HepG2 (cell line): ENCODE measurements at regions of chr6 and their contacts with region 1.

Region 1: DNA sequence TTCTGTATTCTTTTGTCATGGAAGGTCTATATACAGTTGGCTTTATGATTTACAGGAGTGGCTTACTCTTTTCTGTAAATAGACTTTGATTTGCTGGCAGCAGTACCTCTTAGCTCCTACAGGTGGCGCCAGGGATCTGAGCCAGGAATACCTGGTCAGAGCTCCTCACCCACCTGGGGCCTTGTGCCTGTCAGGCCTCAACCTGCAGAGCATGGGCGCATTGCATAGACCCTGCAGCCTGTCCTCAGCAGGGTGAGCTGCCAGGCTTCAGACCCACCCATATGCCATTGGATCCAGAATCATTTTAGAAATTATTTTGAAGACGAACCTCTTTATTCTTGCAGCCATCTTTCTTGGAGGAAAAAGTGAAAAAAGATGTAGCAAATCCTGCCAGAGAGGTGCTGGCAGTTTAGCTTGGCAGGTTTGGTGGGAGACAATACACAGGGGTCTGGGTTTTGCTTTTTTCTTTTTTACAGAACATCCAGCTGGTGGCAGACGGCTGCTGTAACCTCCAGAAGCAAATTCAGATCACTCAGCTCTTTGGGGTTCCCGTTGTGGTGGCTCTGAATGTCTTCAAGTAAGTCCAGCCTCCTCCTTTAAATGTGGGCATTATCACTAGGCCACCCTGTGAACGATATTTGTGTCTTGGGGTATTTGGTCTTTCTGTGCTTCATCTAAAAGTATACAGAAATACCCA is 149.1 kb downstream of the MTHFD1L start:
- DNase-seq: peak; percentile 80
- ATAC-seq: peak; percentile 89
- H3K4me3 ChIP-seq: no peak overlapping the region
- H3K27ac ChIP-seq: no peak overlapping the region
- H3K4me1 ChIP-seq: peaks cover 31% of the 10 kb centered on the region
- H3K27me3 ChIP-seq: no peaks in the 10 kb centered on the region
- CTCF ChIP-seq: peak; percentile 98
- EP300 ChIP-seq: no peak; a peak in 1 of 4 replicates
- POLR2A ChIP-seq: no peak
- RAD21 ChIP-seq: peak; percentile 99

Region 2: GRCh38 chr6:150891888-150892485 is 122.6 kb before region 1 on chr6:
- CTCF ChIA-PET with region 1: interaction called, 3 read pairs
- POLR2A ChIA-PET with region 1: no interaction called
- in situ Hi-C with region 1: no loop called
- intact Hi-C with region 1: loop called (anchors 10 kb)
- DNase-seq: peak; percentile 69
- ATAC-seq: peak; percentile 86
- H3K4me3 ChIP-seq: no peak overlapping the region
- H3K27ac ChIP-seq: no peak overlapping the region
- H3K4me1 ChIP-seq: no peaks in the 10 kb centered on the region
- H3K27me3 ChIP-seq: no peaks in the 10 kb centered on the region
- CTCF ChIP-seq: peak; percentile 92
- EP300 ChIP-seq: no peak
- POLR2A ChIP-seq: no peak
- RAD21 ChIP-seq: peak; percentile 76

Region 3: GRCh38 chr6:151067684-151068596 is 53.4 kb after region 1 on chr6:
- CTCF ChIA-PET with region 1: no interaction called
- POLR2A ChIA-PET with region 1: interaction called, 3 read pairs
- in situ Hi-C with region 1: no loop called
- intact Hi-C with region 1: loop called (anchors 10 kb)
- DNase-seq: peak; percentile 96
- ATAC-seq: peak; percentile 88
- H3K4me3 ChIP-seq: peak overlapping the region; percentile 2 to 45 (median 3); a peak in 3 of 6 replicates
- H3K27ac ChIP-seq: peak overlapping the region; percentile 83
- H3K4me1 ChIP-seq: peaks cover 58% of the 10 kb centered on the region
- H3K27me3 ChIP-seq: no peaks in the 10 kb centered on the region
- CTCF ChIP-seq: no peak
- EP300 ChIP-seq: peak; percentile 54 to 90; a peak in 2 of 4 replicates
- POLR2A ChIP-seq: 0 out of 4 replicates have a peak, but pooled peaks of 1 of the 2 experiments have one; percentile 19
- RAD21 ChIP-seq: no peak

Region 4: DNA sequence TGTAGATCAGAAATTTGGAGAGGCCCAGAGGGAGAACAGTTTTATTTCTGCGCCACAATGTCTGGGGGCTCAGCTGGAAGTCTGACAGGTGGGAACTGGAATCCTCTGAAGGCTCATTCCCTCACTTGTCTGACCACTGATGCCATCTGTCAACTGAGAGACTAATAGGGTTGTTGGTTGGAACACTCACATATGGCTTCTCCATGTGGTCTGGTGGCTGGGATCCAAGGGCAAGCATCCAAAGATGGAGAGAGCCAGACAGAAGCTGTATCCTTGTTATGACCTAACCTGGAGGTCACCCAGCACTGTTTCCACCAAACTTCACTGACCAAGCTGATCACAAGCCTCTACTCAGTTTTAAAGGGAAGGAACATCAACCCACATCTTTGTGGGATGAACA is 107.3 kb after region 1 on chr6:
- CTCF ChIA-PET with region 1: no interaction called
- POLR2A ChIA-PET with region 1: no interaction called
- in situ Hi-C with region 1: no loop called
- intact Hi-C with region 1: loop called (anchors 5 kb)
- DNase-seq: no peak
- ATAC-seq: no peak
- H3K4me3 ChIP-seq: no peak overlapping the region
- H3K27ac ChIP-seq: no peak overlapping the region
- H3K4me1 ChIP-seq: peaks cover 63% of the 10 kb centered on the region
- H3K27me3 ChIP-seq: no peaks in the 10 kb centered on the region
- CTCF ChIP-seq: no peak
- EP300 ChIP-seq: no peak
- POLR2A ChIP-seq: no peak
- RAD21 ChIP-seq: no peak

Region 5: GRCh38 chr6:151330134-151330696 is 315.7 kb after region 1 on chr6:
- CTCF ChIA-PET with region 1: interaction called, 67 read pairs
- POLR2A ChIA-PET with region 1: interaction called, 17 read pairs
- in situ Hi-C with region 1: loop called (anchors 5 kb)
- intact Hi-C with region 1: loop called (anchors 1 kb)
- DNase-seq: no peak
- ATAC-seq: no peak
- H3K4me3 ChIP-seq: no peak overlapping the region
- H3K27ac ChIP-seq: no peak overlapping the region
- H3K4me1 ChIP-seq: peaks cover 15% of the 10 kb centered on the region
- H3K27me3 ChIP-seq: no peaks in the 10 kb centered on the region
- CTCF ChIP-seq: no peak
- EP300 ChIP-seq: no peak
- POLR2A ChIP-seq: no peak
- RAD21 ChIP-seq: no peak

Region 6: GRCh38 chr6:151335930-151336329 is 321.4 kb after region 1 on chr6:
- CTCF ChIA-PET with region 1: interaction called, 14 read pairs
- POLR2A ChIA-PET with region 1: interaction called, 3 read pairs
- in situ Hi-C with region 1: no loop called
- intact Hi-C with region 1: loop called (anchors 1 kb)
- DNase-seq: no peak
- ATAC-seq: no peak
- H3K4me3 ChIP-seq: no peak overlapping the region
- H3K27ac ChIP-seq: no peak overlapping the region
- H3K4me1 ChIP-seq: peaks cover 6% of the 10 kb centered on the region; the same call in 1 of the 2 replicates
- H3K27me3 ChIP-seq: no peaks in the 10 kb centered on the region
- CTCF ChIP-seq: no peak
- EP300 ChIP-seq: no peak
- POLR2A ChIP-seq: no peak
- RAD21 ChIP-seq: no peak